ENCODE measurements at regions of chr3 and their contacts with region 1.

Region 1: DNA sequence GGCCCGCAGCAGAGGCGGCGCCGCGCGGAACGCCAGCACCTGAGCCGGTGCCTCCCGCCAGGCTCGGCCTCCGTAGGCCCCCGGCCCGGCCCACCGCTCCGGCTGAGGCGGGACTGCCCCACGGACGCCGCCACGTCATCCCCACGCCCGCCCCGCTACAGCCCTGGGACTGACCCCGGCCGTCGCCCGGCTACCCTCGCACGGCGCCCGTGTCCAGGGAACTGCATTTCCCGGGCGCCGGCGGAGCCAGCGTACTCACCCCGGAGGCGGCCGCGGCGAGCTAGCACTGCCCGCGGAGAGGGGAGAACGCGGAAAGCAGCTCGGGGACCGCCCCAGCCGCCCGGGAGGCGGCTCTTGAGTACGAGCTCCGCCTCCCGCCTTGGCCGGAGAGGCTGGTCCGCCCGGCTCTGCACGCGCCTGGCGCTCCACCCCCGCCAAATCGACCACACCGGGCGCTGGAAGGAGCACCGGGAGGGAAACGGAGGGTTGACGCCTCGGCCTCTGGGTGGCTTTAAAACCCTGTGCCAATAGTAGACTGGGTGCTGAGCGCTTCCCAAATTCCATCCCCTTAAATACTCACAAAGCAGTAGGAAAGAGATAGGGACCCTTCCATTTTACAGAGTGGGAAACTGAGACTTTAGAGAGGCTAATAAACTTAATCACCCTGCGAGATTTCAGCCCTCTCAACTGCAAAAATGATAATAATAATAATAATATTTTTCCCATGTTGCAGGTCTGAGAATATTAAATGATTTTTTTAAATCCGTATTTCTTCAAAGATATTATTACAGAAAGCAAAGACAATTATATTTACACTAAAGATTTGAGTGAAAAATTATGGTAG is at the start of gene B4GALT4:
- DNase-seq: peak; percentile 92
- CTCF ChIP-seq: no peak

Region 2: GRCh38 chr3:119145500-119146191 is 95.2 kb before region 1 on chr3 and contains the start of gene TEX55:
- CTCF ChIA-PET with region 1: interaction called, 20 read pairs
- POLR2A ChIA-PET with region 1: no interaction called
- DNase-seq: peak; percentile 63
- CTCF ChIP-seq: peak; percentile 50

Region 3: DNA sequence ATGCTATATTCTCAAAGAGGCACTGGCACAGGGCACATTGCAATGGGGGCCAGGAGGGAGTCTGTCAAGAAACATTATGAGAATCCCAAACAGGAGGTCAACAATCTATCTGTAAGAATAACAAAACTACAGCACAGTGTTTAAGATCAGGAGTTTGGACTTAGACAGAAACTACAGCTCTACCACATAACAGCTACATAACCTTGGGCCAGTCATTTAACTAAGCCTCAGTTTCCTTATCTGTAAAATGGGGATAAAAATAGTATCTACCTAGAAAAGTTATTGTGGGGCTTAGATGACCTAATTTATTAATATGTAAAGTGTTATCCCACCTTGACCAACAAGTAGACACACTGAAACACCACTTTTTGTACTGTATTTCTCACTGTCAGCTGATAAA is 10.1 kb before region 1 on chr3:
- CTCF ChIA-PET with region 1: interaction called, 74 read pairs
- POLR2A ChIA-PET with region 1: interaction called, 6 read pairs
- DNase-seq: no peak
- CTCF ChIP-seq: no peak

Region 4: GRCh38 chr3:119352849-119353502 is 112.2 kb after region 1 on chr3:
- CTCF ChIA-PET with region 1: interaction called, 17 read pairs
- POLR2A ChIA-PET with region 1: no interaction called
- DNase-seq: no peak
- CTCF ChIP-seq: peak; percentile 31